PC-3 (cell line): ENCODE measurements at regions of chrX and their contacts with region 1.

Region 1: DNA sequence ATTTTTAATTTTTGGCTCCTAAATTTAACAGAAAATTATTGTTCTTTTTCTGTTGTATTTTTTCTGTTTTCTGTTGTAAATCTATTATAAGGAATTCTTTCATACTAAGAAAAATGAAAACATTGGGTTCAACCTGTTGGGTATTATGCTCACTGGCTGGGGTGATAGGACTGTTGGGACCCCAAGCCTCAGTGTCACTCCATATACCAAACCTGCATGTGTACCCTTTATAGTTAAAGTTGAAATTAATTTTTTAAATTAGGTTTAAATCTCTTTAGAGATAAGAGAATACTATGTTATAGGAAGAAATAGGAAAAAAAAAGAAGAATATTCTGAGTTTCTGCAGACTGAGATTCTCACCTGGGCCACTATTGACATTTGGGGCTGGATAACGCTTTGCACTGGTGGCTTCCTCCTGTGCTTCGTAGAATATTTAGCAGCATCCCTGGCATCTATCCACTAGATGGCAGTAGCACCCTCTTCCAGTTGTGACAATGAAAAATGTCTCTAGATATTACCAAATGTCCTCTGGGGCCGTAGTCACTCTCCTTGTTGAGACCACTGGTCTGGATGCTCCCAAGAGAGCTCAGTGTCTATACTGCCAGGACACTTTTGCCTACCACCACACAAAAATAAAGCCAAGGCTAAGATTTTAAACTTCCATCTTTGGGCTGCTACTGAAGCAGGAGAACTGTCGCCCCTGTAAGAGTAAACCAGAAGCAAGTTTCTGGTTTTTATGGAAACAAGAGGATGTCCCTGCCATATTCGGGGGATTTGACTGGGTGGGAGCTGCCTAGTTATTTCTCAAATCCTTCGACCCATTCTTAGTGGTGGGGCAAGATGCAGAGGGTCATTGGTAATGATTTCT is 22.4 kb upstream of the CLTRN start:
- DNase-seq: peak; percentile 81
- ATAC-seq: peak; percentile 82
- H3K4me3 ChIP-seq: no peak overlapping the region
- H3K27ac ChIP-seq: no peak overlapping the region
- H3K4me1 ChIP-seq: no peaks in the 10 kb centered on the region
- H3K27me3 ChIP-seq: no peaks in the 10 kb centered on the region
- CTCF ChIP-seq: peak; percentile 77

Region 2: DNA sequence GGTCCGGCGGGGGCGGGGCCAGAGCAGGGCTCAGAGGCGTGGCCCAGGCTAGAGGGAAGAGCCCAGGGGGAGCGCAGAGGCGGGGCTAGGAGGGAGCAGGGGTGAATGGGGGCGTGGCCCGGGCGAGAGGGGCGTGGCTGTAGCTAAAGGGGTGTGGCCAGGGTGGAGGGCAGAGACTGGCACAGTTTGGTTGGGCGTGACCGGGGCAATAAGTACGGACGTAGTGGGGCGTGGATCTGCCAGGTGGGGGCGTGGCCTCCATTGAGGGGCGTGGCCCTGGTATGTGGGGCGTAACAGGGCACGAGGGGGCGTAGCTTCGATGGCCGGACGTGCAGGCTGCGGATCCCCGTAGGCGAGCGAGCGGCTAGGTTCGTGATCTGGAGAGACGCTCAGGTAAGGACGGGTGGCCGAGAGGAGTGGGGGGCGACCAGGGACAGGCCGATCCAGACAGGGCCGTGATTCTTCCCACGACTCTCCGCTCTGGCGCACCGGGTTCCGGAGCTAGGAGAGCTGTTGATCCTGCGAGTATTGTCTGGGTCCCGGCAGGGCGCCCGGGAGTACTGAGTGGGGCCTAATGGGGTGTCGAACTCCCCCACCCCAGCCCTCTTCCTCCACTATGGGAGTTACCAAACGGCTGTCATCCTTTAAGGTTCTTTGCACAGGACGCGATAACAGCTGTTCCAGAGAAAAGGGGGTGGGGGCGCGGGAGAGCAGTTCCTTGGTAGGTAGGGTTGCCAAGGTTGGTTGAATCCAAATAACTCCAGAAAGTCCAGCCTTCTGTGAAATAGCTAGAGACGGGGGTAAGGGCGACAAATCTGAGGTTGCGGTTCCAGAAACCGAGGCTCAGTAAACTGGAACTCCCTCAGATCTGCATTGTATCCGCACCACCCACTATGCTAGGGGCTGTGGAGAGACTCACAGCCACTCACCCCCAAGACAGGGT is 51.2 kb after region 1 on chrX and contains the start of gene CA5B:
- CTCF ChIA-PET with region 1: no interaction called
- POLR2A ChIA-PET with region 1: no interaction called
- intact Hi-C with region 1: loop called (anchors 5 kb)
- DNase-seq: peak; percentile 94
- ATAC-seq: peak; percentile 89
- H3K4me3 ChIP-seq: peak within 1 kb of the TSS; percentile 88
- H3K27ac ChIP-seq: peak within 1 kb of the TSS; percentile 88
- H3K4me1 ChIP-seq: peaks cover 27% of the 10 kb centered on the region
- H3K27me3 ChIP-seq: no peaks in the 10 kb centered on the region
- CTCF ChIP-seq: peak; percentile 17; the same call in 1 of the 2 replicates
- total RNA-seq, gene CA5B: 8.5 and 12.3 TPM in 2 replicates

Region 3: GRCh38 chrX:15749642-15750610 is 62.9 kb after region 1 on chrX:
- CTCF ChIA-PET with region 1: no interaction called
- POLR2A ChIA-PET with region 1: no interaction called
- intact Hi-C with region 1: loop called (anchors 5 kb)
- DNase-seq: no peak
- ATAC-seq: no peak
- H3K4me3 ChIP-seq: no peak overlapping the region
- H3K27ac ChIP-seq: peak overlapping the region; percentile 100
- H3K4me1 ChIP-seq: peaks cover 35% of the 10 kb centered on the region
- H3K27me3 ChIP-seq: no peaks in the 10 kb centered on the region
- CTCF ChIP-seq: no peak

Region 4: GRCh38 chrX:15789979-15790768 is 103.1 kb after region 1 on chrX and contains the start of gene ZRSR2:
- CTCF ChIA-PET with region 1: no interaction called
- POLR2A ChIA-PET with region 1: no interaction called
- intact Hi-C with region 1: loop called (anchors 10 kb)
- DNase-seq: peak; percentile 82
- ATAC-seq: peak; percentile 91
- H3K4me3 ChIP-seq: peak within 1 kb of the TSS; percentile 98
- H3K27ac ChIP-seq: peak within 1 kb of the TSS; percentile 72
- H3K4me1 ChIP-seq: 0 out of 2 replicates have a peak, but pooled peaks cover 4% of the 10 kb centered on the region
- H3K27me3 ChIP-seq: no peaks in the 10 kb centered on the region
- CTCF ChIP-seq: no peak
- total RNA-seq, gene ZRSR2: 6.4 and 7.6 TPM in 2 replicates

Region 5: DNA sequence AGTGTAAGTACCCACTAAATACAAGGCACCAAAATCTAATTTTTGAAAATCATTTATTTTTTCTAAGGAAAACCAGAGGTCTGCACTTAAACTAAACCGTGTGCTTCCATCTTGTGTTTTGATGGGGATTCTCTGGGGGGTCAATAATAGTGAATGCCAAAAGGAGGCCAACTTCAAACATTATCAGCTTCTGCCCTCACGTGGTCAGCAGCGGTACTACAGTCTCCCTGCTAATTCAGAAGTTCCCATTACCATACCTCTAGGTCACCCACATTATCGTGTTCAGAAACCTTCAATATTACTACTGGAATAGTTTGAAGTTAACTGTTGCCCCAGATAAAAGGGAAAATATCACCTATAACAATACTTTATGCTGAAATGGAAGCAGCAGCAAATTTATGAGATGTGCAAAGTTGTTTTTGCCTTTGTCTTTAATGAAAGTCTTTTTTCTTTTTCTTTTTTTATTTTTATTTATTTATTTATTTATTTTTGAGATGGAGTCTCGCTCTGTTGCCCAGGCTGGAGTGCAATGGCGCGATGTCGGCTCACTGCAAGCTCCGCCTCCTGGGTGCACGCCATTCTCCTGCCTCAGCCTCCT is 1008.1 kb after region 1 on chrX:
- CTCF ChIA-PET with region 1: no interaction called
- POLR2A ChIA-PET with region 1: no interaction called
- intact Hi-C with region 1: loop called (anchors 2 kb)
- DNase-seq: peak; percentile 75
- ATAC-seq: peak; percentile 51
- H3K4me3 ChIP-seq: no peak overlapping the region
- H3K27ac ChIP-seq: no peak overlapping the region
- H3K4me1 ChIP-seq: no peaks in the 10 kb centered on the region
- H3K27me3 ChIP-seq: no peaks in the 10 kb centered on the region
- CTCF ChIP-seq: peak; percentile 85